CD8-positive, alpha-beta T cell (primary cell): ENCODE measurements at regions of chr6 and their contacts with region 1.

Region 1: GRCh38 chr6:2841264-2842138 is at the start of gene SERPINB1:
- DNase-seq: peak; percentile 47 to 88 (median 71)
- ATAC-seq: peak; percentile 77
- H3K4me3 ChIP-seq: peak within 1 kb of the TSS; percentile 56 to 76
- H3K4me3 Mint-ChIP-seq: peak within 1 kb of the TSS; percentile 88
- H3K27ac ChIP-seq: peak within 1 kb of the TSS; percentile 58 to 68
- H3K27ac Mint-ChIP-seq: peak within 1 kb of the TSS; percentile 92
- H3K4me1 ChIP-seq: peaks cover 30% of the 10 kb centered on the region
- H3K4me1 Mint-ChIP-seq: peaks cover 56% of the 10 kb centered on the region
- H3K27me3 ChIP-seq: no peaks in the 10 kb centered on the region
- H3K27me3 Mint-ChIP-seq: no peaks in the 10 kb centered on the region
- CTCF ChIP-seq: no peak
- total RNA-seq, gene SERPINB1: 48.8 to 50.7 TPM

Region 2: GRCh38 chr6:2853761-2854395 is 12.4 kb after region 1 on chr6:
- CTCF ChIA-PET with region 1: interaction called, 41 read pairs
- POLR2A ChIA-PET with region 1: interaction called, 12 read pairs
- intact Hi-C with region 1: loop called in 1 of 2 experiments (anchors 1 kb)
- DNase-seq: peak in 7 of 9 experiments; percentile 44 to 91 (median 76)
- ATAC-seq: peak; percentile 46
- H3K4me3 ChIP-seq: peak overlapping the region; percentile 43 to 47
- H3K4me3 Mint-ChIP-seq: peak overlapping the region; percentile 77
- H3K27ac ChIP-seq: peak overlapping the region; percentile 49 to 97
- H3K27ac Mint-ChIP-seq: peak overlapping the region; percentile 93
- H3K4me1 ChIP-seq: peaks cover 60% of the 10 kb centered on the region
- H3K4me1 Mint-ChIP-seq: peaks cover 65% of the 10 kb centered on the region
- H3K27me3 ChIP-seq: no peaks in the 10 kb centered on the region
- H3K27me3 Mint-ChIP-seq: no peaks in the 10 kb centered on the region
- CTCF ChIP-seq: peak; percentile 52

Region 3: DNA sequence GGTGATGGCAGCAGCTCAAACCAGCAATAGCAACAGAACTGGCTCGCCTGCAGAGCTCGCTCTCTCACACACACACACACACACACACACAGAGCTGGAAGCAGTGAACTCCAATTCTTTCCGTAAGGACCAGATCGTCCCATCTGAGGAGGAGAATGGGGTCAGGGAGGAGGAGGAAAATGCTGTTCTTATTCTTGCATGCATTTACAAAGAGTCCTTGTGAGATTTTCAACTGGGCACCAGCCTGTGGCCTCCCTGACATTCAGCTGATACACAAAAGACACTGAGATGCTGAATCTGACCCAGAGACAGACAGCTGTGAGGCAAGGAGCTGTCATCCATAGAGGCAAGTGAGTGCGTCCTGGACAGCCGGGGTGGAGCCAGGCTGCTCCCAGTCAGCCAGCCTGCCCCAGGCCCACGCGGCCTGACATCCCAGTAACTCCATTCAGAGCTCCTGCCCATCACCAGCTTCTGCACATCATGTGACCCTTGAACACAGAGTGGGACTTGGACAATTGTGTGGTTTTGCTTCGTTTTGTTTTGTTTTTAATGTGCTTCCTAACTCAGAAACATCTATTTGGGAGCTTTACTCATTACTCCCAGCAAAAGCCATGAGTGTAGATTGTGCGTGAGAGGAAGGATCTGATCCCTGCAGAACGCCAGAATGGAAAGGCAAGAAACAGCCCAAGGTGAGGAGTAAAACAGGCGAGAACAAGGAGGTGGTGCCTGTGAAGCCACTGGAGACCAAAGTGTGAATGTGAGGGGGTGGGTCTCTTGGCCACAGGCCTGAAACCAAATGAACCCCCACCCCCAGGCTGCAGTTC is 59.5 kb after region 1 on chr6:
- CTCF ChIA-PET with region 1: interaction called, 56 read pairs
- POLR2A ChIA-PET with region 1: interaction called, 17 read pairs
- intact Hi-C with region 1: no loop called
- DNase-seq: peak in 1 of 9 experiments; percentile 46
- ATAC-seq: no peak
- H3K4me3 ChIP-seq: peak overlapping the region; percentile 73 to 90
- H3K4me3 Mint-ChIP-seq: peak overlapping the region; percentile 99
- H3K27ac ChIP-seq: peak overlapping the region; percentile 67 to 82
- H3K27ac Mint-ChIP-seq: peak overlapping the region; percentile 96
- H3K4me1 ChIP-seq: peaks cover 37% of the 10 kb centered on the region
- H3K4me1 Mint-ChIP-seq: peaks cover 60% of the 10 kb centered on the region
- H3K27me3 ChIP-seq: no peaks in the 10 kb centered on the region
- H3K27me3 Mint-ChIP-seq: no peaks in the 10 kb centered on the region
- CTCF ChIP-seq: no peak

Region 4: DNA sequence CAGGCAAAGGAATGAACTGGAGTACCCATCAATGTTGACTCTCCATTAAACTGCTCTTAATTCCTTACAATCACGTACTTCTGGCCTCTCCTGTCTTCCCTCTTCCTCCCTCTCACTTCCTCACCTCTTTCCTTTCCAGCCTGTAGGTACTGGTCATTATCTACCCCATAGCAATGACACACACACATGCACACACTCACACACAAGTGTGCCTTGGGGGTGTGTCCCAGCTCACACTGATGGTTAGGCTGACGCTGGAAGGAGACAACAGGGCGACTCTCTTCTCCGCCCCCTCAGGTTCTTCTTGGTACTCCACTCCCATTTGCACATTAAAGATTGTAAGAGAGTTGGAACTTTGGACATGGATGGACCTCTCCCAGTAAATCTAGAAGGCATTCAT is 75.6 kb after region 1 on chr6:
- CTCF ChIA-PET with region 1: interaction called, 202 read pairs
- POLR2A ChIA-PET with region 1: interaction called, 24 read pairs
- intact Hi-C with region 1: no loop called
- DNase-seq: peak in 1 of 9 experiments; percentile 1
- ATAC-seq: no peak
- H3K4me3 ChIP-seq: no peak overlapping the region
- H3K4me3 Mint-ChIP-seq: no peak overlapping the region
- H3K27ac ChIP-seq: peak overlapping the region in 1 of 2 experiments; percentile 51
- H3K27ac Mint-ChIP-seq: no peak overlapping the region
- H3K4me1 ChIP-seq: no peaks in the 10 kb centered on the region
- H3K4me1 Mint-ChIP-seq: peaks cover 11% of the 10 kb centered on the region
- H3K27me3 ChIP-seq: no peaks in the 10 kb centered on the region
- H3K27me3 Mint-ChIP-seq: no peaks in the 10 kb centered on the region
- CTCF ChIP-seq: no peak

Region 5: DNA sequence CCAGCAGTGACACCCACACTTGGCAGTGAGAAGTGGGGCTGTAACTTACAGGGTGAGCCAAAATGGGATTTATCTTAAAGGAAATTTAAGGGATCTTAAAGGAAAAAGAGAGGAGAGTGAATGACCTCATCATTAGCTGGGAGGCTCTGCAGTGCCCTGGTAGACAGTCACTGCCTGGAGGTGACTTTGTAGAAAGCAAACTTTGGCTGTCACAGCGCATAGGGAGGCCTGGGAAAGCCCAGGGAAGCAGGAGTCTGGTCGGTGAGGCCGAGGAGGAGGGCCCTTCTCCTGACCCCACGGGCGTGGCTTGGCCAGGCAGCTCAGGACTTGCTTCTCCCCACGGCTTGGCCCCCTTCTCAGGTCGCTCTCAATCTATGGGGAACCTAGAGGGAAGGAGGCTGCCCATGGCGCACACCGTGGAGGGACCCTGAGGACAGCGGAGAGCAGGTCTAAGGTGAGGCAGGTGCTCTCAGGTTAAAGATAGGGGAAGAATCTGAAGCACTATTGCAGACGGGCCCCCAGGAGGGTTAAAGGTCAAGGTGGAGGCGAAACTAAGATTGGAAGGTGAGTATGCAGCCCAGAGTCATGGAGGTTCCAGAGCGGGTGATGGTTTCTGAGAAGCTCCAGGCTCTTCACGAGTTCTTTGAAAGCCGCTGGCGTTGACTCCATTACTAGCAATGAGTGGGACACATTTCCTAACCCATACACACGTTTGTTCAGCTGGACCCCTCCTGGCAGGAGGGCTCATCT is 211.2 kb after region 1 on chr6:
- CTCF ChIA-PET with region 1: interaction called, 4 read pairs
- POLR2A ChIA-PET with region 1: interaction called, 4 read pairs
- intact Hi-C with region 1: loop called in 1 of 2 experiments (anchors 5 kb)
- DNase-seq: no peak
- ATAC-seq: no peak
- H3K4me3 ChIP-seq: no peak overlapping the region
- H3K4me3 Mint-ChIP-seq: peak overlapping the region; percentile 70
- H3K27ac ChIP-seq: no peak overlapping the region
- H3K27ac Mint-ChIP-seq: no peak overlapping the region
- H3K4me1 ChIP-seq: peaks cover 8% of the 10 kb centered on the region
- H3K4me1 Mint-ChIP-seq: peaks cover 13% of the 10 kb centered on the region
- H3K27me3 ChIP-seq: no peaks in the 10 kb centered on the region
- H3K27me3 Mint-ChIP-seq: no peaks in the 10 kb centered on the region
- CTCF ChIP-seq: no peak